Activated CD4-positive, alpha-beta T cell treated with anti-CD3 and anti-CD28 coated beads, Interleukin-2, amount 10 ng/mL, durations not matched to agents 24 days and 14 days (primary cell): ENCODE measurements at regions of chr15 and their contacts with region 1.

Region 1: DNA sequence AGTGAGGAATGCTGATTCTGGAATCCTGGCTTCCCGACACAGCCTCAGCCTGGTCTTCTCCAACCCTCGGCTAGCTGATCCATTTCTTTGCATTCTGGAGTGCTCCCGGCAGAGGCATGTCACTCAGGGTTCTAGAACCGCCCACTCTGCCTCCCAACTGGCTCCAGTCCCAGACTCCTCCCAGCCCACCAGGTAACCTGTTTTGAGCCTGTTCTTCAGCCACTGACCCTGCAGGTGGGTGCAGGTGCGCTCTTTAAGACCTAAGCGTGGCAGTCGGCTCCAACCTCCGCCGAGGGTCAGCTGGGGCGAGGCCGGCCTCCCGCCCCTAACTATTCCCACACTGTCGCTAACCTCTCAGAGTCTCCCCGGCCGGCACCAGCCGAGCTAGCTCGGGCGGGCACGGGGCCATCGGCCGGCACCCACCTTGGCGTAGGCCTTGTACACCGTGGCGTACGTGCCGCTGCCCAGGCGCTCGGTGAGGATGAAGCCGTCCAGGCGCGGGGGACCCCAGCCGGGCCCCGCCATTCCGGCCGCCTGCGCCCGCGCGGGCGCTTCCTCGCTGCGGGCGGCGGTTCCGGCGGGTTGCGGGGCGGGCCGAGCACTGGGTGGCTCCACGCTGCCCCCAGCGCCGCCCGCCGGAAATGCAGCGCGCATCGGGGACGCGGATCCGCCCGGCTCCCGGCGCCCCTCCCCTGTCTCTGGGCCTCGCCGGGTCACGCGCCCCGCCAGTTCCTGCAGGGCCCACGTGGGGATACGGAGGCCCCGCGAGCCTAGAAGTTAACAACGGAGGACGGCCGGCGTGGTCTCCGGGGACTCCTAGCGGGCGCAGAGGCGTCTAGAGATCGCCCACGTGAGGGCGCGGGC is at the start of gene ULK3:
- DNase-seq: peak; percentile 99
- H3K4me3 Mint-ChIP-seq: peak within 1 kb of the TSS; percentile 95
- H3K27ac Mint-ChIP-seq: peak within 1 kb of the TSS; percentile 95
- H3K4me1 Mint-ChIP-seq: peaks cover 48% of the 10 kb centered on the region
- H3K27me3 Mint-ChIP-seq: no peaks in the 10 kb centered on the region
- total RNA-seq, gene ULK3: 52.6 and 57.3 TPM in 2 replicates

Region 2: GRCh38 chr15:74326451-74327145 is 516.2 kb before region 1 on chr15:
- intact Hi-C with region 1: no loop called
- DNase-seq: no peak
- H3K4me3 Mint-ChIP-seq: no peak overlapping the region
- H3K27ac Mint-ChIP-seq: no peak overlapping the region
- H3K4me1 Mint-ChIP-seq: peaks cover 2% of the 10 kb centered on the region
- H3K27me3 Mint-ChIP-seq: peaks cover 9% of the 10 kb centered on the region

Region 3: DNA sequence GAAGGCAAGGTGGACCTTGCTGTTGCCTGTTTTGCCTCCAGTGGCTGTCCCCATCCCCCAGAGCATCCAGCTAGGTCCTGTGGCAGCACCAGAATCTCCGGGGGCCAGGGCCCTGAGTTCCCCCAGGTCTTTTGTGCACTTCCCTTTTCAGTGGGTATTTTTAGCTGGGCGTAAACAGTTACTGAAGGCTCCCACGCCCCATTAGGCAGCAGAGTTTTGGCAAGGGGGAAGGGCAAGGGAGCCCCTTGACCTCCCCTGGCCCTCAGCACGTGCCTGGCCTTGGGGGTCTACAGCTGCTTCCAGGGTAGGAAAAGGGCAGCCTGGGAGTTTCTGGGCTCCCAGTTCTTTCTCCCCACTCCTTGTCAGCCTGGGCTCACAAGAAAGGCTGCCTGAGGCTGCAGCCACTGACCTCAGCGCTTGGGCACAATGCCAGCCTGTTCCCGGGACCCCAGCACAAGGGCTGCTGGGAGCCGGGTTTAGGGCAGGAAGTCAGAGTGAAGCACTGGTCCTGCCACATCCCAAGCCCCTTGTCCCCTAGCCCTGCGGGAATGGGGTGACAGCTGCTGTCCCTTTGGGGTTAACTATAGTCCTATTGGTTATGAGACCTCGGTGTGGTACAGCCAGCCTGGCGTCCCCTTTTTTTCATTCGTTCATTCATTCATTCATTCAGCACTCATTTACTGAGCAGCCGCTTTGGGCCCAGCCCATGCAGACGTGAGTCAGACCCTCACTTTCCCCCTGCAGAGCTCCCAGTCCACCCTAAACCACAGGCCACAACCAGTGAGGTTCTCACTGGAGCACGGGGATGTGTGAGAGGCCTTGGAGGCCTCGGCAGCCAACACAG is 52.5 kb before region 1 on chr15:
- intact Hi-C with region 1: no loop called
- DNase-seq: peak; percentile 75
- H3K4me3 Mint-ChIP-seq: peak overlapping the region; percentile 96
- H3K27ac Mint-ChIP-seq: peak overlapping the region; percentile 99
- H3K4me1 Mint-ChIP-seq: peaks cover 76% of the 10 kb centered on the region
- H3K27me3 Mint-ChIP-seq: no peaks in the 10 kb centered on the region

Region 4: DNA sequence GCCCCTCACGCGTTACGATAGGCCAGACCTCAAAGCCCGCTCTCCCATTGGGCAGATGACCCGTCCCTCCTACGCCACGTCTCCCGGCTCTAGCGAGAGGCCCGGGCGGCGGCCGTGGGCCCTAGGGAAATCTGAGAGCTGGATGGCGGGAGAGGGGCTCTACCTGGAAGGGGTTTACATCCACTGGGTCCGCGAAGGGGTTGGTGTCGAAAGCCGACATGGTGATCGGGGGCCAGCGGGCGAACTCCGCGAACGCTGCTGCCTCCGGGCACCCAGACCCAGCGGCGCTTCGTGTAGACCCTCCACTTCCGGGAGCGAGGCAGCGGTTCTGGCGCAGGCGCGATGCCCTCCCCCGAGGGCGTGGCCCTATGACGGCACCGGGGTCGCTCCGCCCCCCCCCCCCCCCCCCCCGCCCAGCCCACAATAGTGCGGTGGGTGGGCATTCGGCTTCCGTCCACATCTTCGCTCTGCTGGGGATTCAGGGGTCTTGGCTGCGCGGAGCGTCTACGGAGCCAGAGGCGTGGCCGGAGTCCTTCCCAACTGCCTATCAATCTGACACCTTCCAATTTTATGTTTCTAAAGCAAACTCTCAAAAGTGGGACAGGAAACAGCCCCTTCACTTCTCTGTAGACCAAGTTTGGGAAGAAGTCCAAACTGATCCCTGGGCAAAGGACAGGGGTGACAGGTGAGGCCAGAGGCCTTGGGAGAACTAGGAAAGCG is 30.4 kb after region 1 on chr15 and contains the start of gene SCAMP2:
- intact Hi-C with region 1: loop called (anchors 1 kb)
- DNase-seq: peak; percentile 96
- H3K4me3 Mint-ChIP-seq: peak within 1 kb of the TSS; percentile 99
- H3K27ac Mint-ChIP-seq: peak within 1 kb of the TSS; percentile 93
- H3K4me1 Mint-ChIP-seq: peaks cover 44% of the 10 kb centered on the region
- H3K27me3 Mint-ChIP-seq: no peaks in the 10 kb centered on the region
- total RNA-seq, gene SCAMP2: 89.4 and 94.8 TPM in 2 replicates

Region 5: GRCh38 chr15:74889883-74890664 is 47.3 kb after region 1 on chr15 and contains the start of gene MPI:
- intact Hi-C with region 1: loop called (anchors 1 kb)
- DNase-seq: peak; percentile 96
- H3K4me3 Mint-ChIP-seq: peak within 1 kb of the TSS; percentile 80
- H3K27ac Mint-ChIP-seq: peak within 1 kb of the TSS; percentile 84
- H3K4me1 Mint-ChIP-seq: peaks cover 39% of the 10 kb centered on the region
- H3K27me3 Mint-ChIP-seq: no peaks in the 10 kb centered on the region
- total RNA-seq, gene MPI: 63.9 and 64.4 TPM in 2 replicates

Region 6: DNA sequence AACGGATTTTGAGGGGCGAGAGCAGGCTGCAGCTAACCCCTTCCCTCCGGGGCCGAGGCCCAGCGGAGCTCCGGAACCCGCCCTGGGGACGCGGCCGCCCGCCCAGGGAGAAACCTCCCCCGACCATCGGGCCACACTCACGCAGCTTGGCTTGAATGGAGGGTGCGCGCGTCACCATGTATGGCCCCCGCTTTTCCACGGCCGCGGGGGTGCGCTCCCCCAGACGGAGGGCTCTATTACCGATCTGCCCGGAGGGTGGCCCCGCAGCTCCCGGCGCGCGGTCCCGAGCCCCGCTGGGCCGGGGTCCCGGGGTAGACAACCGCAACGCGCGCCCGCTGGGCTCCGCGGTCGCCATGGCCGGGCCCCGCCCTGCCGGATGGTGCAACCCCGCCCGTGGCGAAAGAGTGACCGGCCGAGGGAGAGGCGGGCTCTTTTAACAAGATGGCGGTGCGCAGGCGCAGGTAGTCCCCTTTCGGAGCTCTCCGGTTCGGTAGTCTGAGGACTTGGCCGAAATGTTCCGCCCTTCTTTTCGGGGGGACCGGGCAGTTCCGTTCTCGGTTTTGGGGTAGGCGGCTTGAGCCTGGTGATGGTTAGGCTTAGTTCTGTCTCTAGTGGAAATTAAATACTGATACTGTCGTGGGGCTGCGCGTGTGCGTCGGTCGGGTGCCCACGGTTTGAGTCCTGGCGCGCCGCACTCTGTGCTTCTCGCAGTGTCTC is 63.8 kb after region 1 on chr15 and contains the start of gene FAM219B:
- intact Hi-C with region 1: loop called (anchors 1 kb)
- DNase-seq: peak; percentile 95
- H3K4me3 Mint-ChIP-seq: peak within 1 kb of the TSS; percentile 97
- H3K27ac Mint-ChIP-seq: peak within 1 kb of the TSS; percentile 93
- H3K4me1 Mint-ChIP-seq: peaks cover 35% of the 10 kb centered on the region
- H3K27me3 Mint-ChIP-seq: no peaks in the 10 kb centered on the region
- total RNA-seq, gene FAM219B: 68.0 and 82.0 TPM in 2 replicates

Region 7: GRCh38 chr15:74950078-74951000 is 107.5 kb after region 1 on chr15:
- intact Hi-C with region 1: loop called (anchors 5 kb)
- DNase-seq: peak; percentile 95
- H3K4me3 Mint-ChIP-seq: no peak overlapping the region
- H3K27ac Mint-ChIP-seq: no peak overlapping the region
- H3K4me1 Mint-ChIP-seq: peaks cover 16% of the 10 kb centered on the region
- H3K27me3 Mint-ChIP-seq: peaks cover 4% of the 10 kb centered on the region